ENCODE measurements at regions of chr1 and their contacts with region 1.

Region 1: DNA sequence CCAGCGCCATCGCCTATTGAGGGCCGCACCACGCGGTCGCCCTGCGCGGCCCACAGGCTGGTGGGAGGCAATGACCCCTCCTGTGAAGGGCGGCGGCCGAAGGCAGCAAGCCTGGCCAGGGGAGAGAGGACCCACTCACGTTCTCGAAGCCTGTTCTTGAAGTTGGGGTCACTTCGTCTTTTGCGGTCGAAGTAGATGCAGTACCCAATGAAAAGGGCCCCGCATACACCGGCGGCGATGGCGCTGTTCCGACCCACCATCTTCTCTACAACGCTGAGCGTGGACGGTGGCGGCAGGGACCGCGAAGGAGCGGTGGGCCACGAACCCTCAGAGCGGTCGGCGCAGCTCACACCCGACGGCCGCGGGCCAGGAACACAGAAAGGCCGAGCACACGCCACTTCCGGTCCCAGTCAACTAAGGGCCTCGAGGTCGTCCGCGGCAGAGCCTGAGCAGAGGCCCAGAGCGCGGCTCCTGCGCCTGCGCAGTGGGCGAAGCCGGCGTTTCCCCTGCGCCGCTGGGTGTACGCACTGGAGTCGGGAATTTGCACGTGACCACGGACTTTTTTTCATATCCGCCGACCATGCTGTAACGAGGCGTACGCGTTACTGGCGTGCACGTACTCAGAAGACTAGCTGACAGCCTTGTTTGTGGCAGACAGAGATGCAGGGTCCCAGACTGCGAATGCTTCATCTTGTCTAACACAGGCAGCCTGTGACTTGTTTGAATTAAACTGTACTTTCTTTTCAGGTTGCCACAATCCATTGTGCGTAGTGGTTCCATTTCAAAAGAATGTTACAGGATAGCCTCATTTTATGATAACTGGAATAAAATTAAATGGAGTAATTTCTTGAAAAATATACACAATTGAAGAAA is at the start of gene TOMM20:
- DNase-seq: peak; percentile 95 to 96
- H3K4me3 ChIP-seq: peak within 1 kb of the TSS; percentile 81 to 96 (median 90)
- H3K27ac ChIP-seq: peak within 1 kb of the TSS; percentile 96
- H3K4me1 ChIP-seq: peaks cover 0 to 6% (median 3%) of the 10 kb centered on the region in 4 experiments; a peak in 5 of 7 replicates
- H3K27me3 ChIP-seq: no peaks in the 10 kb centered on the region
- CTCF ChIP-seq: 0 out of 4 replicates have a peak, but pooled peaks of 1 of the 3 experiments have one; percentile 0
- EP300 ChIP-seq: no peak
- POLR2A ChIP-seq: peak; percentile 91 to 98
- RAD21 ChIP-seq: no peak
- total RNA-seq, gene TOMM20: 151 and 168 TPM in 2 replicates

Region 2: GRCh38 chr1:235105051-235106043 is 23.3 kb before region 1 on chr1:
- CTCF ChIA-PET with region 1: no interaction called
- POLR2A ChIA-PET with region 1: interaction called, 83 read pairs
- DNase-seq: peak in 1 of 2 experiments; percentile 43
- H3K4me3 ChIP-seq: no peak overlapping the region
- H3K27ac ChIP-seq: no peak overlapping the region
- H3K4me1 ChIP-seq: peaks cover 0 to 3% (median 0%) of the 10 kb centered on the region in 4 experiments; a peak in 3 of 7 replicates
- H3K27me3 ChIP-seq: no peaks in the 10 kb centered on the region
- CTCF ChIP-seq: no peak
- EP300 ChIP-seq: no peak
- POLR2A ChIP-seq: no peak
- RAD21 ChIP-seq: no peak

Region 3: GRCh38 chr1:235113183-235113917 is 15.3 kb before region 1 on chr1:
- CTCF ChIA-PET with region 1: interaction called, 8 read pairs
- POLR2A ChIA-PET with region 1: interaction called, 83 read pairs
- DNase-seq: peak in 1 of 2 experiments; percentile 27
- H3K4me3 ChIP-seq: no peak overlapping the region
- H3K27ac ChIP-seq: no peak overlapping the region
- H3K4me1 ChIP-seq: no peaks in the 10 kb centered on the region
- H3K27me3 ChIP-seq: no peaks in the 10 kb centered on the region
- CTCF ChIP-seq: no peak
- EP300 ChIP-seq: no peak
- POLR2A ChIP-seq: peak in 1 of 2 experiments; percentile 35; a peak in 1 of 3 replicates
- RAD21 ChIP-seq: no peak

Region 4: GRCh38 chr1:235138821-235139220 is 10.1 kb after region 1 on chr1:
- CTCF ChIA-PET with region 1: interaction called, 4 read pairs
- POLR2A ChIA-PET with region 1: interaction called, 63 read pairs
- DNase-seq: peak in 1 of 2 experiments; percentile 16
- H3K4me3 ChIP-seq: no peak overlapping the region
- H3K27ac ChIP-seq: no peak overlapping the region
- H3K4me1 ChIP-seq: no peaks in the 10 kb centered on the region
- H3K27me3 ChIP-seq: no peaks in the 10 kb centered on the region
- CTCF ChIP-seq: no peak
- EP300 ChIP-seq: no peak
- POLR2A ChIP-seq: no peak
- RAD21 ChIP-seq: no peak

Region 5: DNA sequence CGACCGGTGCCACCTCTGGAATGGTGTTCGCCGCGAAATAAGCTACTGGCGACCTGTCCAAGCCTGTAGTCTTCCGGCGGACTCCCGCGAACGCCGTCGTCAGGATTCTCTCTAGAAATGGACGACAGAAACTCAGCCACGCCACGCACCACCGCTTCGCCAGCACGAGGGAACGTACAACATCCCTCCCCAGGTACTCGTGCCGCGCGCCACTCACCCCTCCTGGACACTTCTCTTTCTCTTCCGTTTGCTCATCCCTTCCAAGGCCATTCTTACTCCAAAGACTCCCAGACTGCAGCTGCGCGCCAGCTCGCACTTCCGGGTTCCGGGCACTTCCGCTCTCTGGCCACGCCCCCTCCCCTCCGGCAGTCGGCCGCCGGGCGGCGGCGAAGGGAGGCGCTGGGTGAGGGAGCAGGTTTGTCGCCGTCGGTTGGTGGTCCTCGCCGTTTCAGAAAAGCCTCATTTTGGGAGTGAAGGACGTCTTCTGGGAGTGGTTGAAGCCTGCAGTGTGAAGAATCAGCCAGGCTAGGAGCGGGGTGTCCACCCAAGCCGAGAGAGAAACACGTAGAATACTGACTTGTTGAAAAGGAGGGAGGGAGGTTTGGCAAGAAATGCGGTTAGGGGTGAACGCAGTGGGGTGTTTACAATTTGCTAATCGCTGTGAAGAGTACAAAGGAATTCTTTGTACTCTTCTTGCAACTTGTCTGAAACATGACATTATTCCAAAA is 32.4 kb after region 1 on chr1 and contains the start of gene RBM34:
- CTCF ChIA-PET with region 1: interaction called, 4 read pairs
- POLR2A ChIA-PET with region 1: interaction called, 13 read pairs
- DNase-seq: peak; percentile 62 to 96
- H3K4me3 ChIP-seq: peak within 1 kb of the TSS; percentile 81 to 99 (median 94)
- H3K27ac ChIP-seq: peak within 1 kb of the TSS; percentile 82
- H3K4me1 ChIP-seq: peaks cover 0 to 4% (median 1%) of the 10 kb centered on the region in 4 experiments; a peak in 4 of 7 replicates
- H3K27me3 ChIP-seq: no peaks in the 10 kb centered on the region
- CTCF ChIP-seq: peak in 2 of 3 experiments; percentile 1 to 21; a peak in 2 of 4 replicates
- EP300 ChIP-seq: no peak
- POLR2A ChIP-seq: peak; percentile 94 to 96
- RAD21 ChIP-seq: no peak
- total RNA-seq, gene RBM34: 108 and 115 TPM in 2 replicates